ENCODE measurements at regions of chr6 and their contacts with region 1.

Region 1: GRCh38 chr6:157274471-157275226 is 48.7 kb downstream of the TMEM242 start:
- DNase-seq: peak; percentile 67 to 69
- ATAC-seq: peak; percentile 88 to 95
- H3K4me3 ChIP-seq: peak overlapping the region; percentile 57
- H3K27ac ChIP-seq: peak overlapping the region; percentile 65 to 91
- H3K4me1 ChIP-seq: no peaks in the 10 kb centered on the region
- CTCF ChIP-seq: peak; percentile 71
- EP300 ChIP-seq: no peak
- POLR2A ChIP-seq: 0 out of 2 replicates have a peak, but pooled peaks have one; percentile 3
- RAD21 ChIP-seq: peak; percentile 32 to 71; a peak in 4 of 5 replicates

Region 2: DNA sequence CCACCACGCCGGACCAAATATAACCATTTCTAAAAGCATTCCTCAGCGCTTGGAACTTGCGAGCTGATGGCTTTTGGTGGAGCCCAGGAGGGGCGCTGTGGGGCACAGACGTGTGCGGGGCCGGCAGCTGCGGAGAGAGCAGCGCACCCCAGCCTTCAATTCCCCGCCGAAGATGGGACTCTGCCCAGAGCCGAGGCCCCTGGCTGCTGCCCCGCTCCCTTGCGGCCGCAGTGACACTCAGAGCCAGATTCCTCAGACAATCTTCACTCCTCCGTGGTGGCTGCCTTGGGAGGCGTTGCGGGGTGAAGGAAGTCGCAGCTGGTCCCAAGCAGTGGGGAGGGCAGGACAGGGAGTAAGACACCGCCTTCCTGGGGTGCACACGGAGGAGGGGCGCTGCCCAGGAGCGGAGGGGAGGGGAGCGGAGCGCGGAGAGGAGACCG is 39.0 kb before region 1 on chr6:
- CTCF ChIA-PET with region 1: interaction called, 10 read pairs
- POLR2A ChIA-PET with region 1: no interaction called
- DNase-seq: peak; percentile 60 to 70
- ATAC-seq: peak; percentile 90 to 96
- H3K4me3 ChIP-seq: peak overlapping the region; percentile 59
- H3K27ac ChIP-seq: peak overlapping the region; percentile 41 to 79; a peak in 5 of 6 replicates
- H3K4me1 ChIP-seq: peaks cover 7% of the 10 kb centered on the region; the same call in 1 of the 3 replicates
- CTCF ChIP-seq: peak; percentile 55
- EP300 ChIP-seq: no peak
- POLR2A ChIP-seq: no peak
- RAD21 ChIP-seq: peak; percentile 19 to 25; a peak in 2 of 5 replicates

Region 3: GRCh38 chr6:157284738-157285421 is 10.2 kb after region 1 on chr6:
- CTCF ChIA-PET with region 1: interaction called, 18 read pairs
- POLR2A ChIA-PET with region 1: no interaction called
- DNase-seq: no peak
- ATAC-seq: no peak
- H3K4me3 ChIP-seq: no peak overlapping the region
- H3K27ac ChIP-seq: no peak overlapping the region
- H3K4me1 ChIP-seq: no peaks in the 10 kb centered on the region
- CTCF ChIP-seq: no peak
- EP300 ChIP-seq: no peak
- POLR2A ChIP-seq: no peak
- RAD21 ChIP-seq: no peak

Measured in A549 (cell line).